ENCODE measurements at regions of chr1 and their contacts with region 1.

Region 1: GRCh38 chr1:228102791-228103620 is at the start of gene C1orf35:
- DNase-seq: peak; percentile 96
- H3K4me3 ChIP-seq: peak within 1 kb of the TSS; percentile 81
- H3K27ac ChIP-seq: peak within 1 kb of the TSS; percentile 45
- H3K4me1 ChIP-seq: peaks cover 25% of the 10 kb centered on the region
- CTCF ChIP-seq: no peak
- total RNA-seq, gene C1orf35: 33.3 and 33.4 TPM in 2 replicates

Region 2: DNA sequence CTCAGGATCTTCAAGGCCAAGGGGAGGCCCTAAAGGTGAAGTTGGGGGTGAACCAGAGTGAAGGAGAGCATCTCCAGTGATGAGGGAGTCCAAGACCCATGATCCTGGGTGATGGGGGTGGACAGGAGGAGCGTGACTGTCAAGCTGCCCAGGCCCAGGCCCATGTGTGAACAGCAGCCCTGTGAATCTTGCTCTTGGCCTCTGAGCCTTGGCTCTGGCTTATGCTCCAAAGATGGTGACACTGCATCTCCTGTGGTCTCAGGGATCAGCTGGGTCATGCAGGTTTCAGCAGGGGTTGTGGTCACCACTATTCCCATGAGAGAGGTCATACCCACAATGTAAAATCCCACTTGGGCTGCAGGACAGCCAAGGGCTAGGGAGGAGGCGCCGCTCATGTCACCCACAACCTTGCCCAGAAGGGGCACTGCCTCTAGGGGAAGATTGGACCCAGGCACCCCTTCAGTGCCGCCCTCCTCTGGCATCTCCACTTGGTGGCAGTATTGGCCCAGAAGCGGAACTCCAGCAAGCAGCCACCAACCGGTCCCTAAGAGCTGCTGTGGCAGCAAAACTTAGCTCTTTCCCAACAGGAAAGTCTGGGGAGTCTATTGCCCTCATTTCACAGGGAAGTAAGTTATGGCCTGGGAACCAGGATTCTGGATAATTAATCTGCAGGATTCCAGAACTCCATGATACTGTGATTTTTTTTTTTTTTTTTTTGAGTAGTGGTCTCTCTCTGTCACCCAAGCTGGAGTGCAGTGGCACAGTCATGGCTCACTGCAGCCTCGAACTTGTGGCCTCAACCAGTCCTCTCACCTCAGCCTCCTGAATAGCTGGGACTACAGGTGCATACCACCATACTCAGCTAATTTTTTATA is 103.7 kb before region 1 on chr1:
- CTCF ChIA-PET with region 1: no interaction called
- POLR2A ChIA-PET with region 1: no interaction called
- intact Hi-C with region 1: loop called (anchors 1 kb)
- DNase-seq: peak; percentile 76
- H3K4me3 ChIP-seq: no peak overlapping the region
- H3K27ac ChIP-seq: no peak overlapping the region
- H3K4me1 ChIP-seq: no peaks in the 10 kb centered on the region
- CTCF ChIP-seq: peak; percentile 91

Region 3: GRCh38 chr1:228082135-228082891 is 20.7 kb before region 1 on chr1 and contains the start of gene ARF1:
- CTCF ChIA-PET with region 1: no interaction called
- POLR2A ChIA-PET with region 1: interaction called, 5 read pairs
- intact Hi-C with region 1: loop called (anchors 1 kb)
- DNase-seq: peak; percentile 97
- H3K4me3 ChIP-seq: peak within 1 kb of the TSS; percentile 84
- H3K27ac ChIP-seq: peak within 1 kb of the TSS; percentile 62
- H3K4me1 ChIP-seq: peaks cover 29% of the 10 kb centered on the region
- CTCF ChIP-seq: no peak
- total RNA-seq, gene ARF1: 125 and 163 TPM in 2 replicates

Region 4: DNA sequence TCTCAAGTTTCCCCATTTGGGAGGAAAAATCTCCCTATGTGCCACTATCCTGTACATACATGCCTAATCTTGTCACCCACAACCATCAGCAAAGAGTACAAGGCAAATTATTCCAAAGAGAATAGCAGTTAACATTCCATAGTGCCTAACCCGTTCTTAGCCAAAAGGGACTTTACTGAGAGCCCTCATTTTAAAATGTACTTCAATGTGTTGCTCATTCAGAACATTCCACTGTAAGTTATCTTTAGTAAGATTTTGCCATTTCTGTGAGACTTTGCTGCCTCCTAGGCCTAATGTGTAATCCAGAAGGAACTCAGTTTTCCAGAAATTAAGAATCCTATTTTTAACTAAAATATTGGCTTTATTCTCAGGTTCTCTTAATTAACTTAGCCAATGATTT is 17.3 kb after region 1 on chr1:
- CTCF ChIA-PET with region 1: no interaction called
- POLR2A ChIA-PET with region 1: no interaction called
- intact Hi-C with region 1: no loop called
- DNase-seq: no peak
- H3K4me3 ChIP-seq: no peak overlapping the region
- H3K27ac ChIP-seq: no peak overlapping the region
- H3K4me1 ChIP-seq: peaks cover 8% of the 10 kb centered on the region
- CTCF ChIP-seq: no peak

Region 5: DNA sequence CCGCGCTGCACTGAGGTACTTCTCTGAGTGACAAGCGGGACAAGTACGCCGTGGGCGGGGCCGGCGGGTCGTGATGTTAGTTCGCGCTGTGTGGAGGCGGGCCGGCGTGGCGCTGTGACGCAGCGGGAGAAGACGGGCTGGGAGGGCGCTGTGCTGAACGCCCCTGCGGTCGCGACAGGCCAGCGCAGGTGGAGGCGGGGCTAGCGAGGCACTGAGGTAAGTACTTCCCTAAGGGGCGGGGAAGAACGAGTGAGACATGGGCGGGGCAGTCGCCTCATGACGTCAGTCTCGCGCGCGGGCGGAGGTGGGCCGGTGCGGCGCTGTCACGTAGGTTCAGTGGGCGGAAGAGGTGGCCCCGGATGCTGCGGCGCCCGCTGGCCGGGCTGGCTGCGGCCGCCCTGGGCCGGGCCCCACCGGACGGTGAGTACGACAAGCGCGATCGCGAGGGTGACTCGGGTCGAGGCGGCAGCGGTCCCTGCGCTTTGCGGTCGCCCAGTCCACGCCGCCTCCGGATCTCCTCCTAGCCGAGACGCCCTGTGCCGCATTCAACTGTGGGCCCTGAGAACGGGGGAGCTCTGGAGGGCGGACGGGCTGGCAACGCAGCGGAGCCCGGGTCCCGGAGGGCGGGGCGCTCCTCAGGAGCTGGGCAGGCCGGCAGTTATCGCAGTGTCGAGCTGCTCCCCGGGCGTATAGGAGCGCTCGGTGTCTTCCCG is 37.1 kb after region 1 on chr1 and contains the start of gene GUK1:
- CTCF ChIA-PET with region 1: no interaction called
- POLR2A ChIA-PET with region 1: interaction called, 4 read pairs
- intact Hi-C with region 1: loop called (anchors 1 kb)
- DNase-seq: peak; percentile 100
- H3K4me3 ChIP-seq: peak within 1 kb of the TSS; percentile 92
- H3K27ac ChIP-seq: peak within 1 kb of the TSS; percentile 79
- H3K4me1 ChIP-seq: peaks cover 77% of the 10 kb centered on the region
- CTCF ChIP-seq: 0 out of 2 replicates have a peak, but pooled peaks have one; percentile 20
- total RNA-seq, gene GUK1: 197 and 201 TPM in 2 replicates

Region 6: GRCh38 chr1:228464487-228464983 is 361.5 kb after region 1 on chr1:
- CTCF ChIA-PET with region 1: no interaction called
- POLR2A ChIA-PET with region 1: no interaction called
- intact Hi-C with region 1: no loop called
- DNase-seq: peak; percentile 98
- H3K4me3 ChIP-seq: peak overlapping the region; percentile 95
- H3K27ac ChIP-seq: peak overlapping the region; percentile 95
- H3K4me1 ChIP-seq: peaks cover 55% of the 10 kb centered on the region
- CTCF ChIP-seq: no peak

Measured in OCI-LY7 (cell line).